Gastrocnemius medialis (tissue), 4 donors: ENCODE measurements at regions of chr2 and their contacts with region 1.

Region 1: GRCh38 chr2:101419096-101419663 is 31.9 kb upstream of the CREG2 start:
- DNase-seq: peak; percentile 17 to 32
- ATAC-seq: peak; percentile 62 to 83
- H3K4me3 ChIP-seq: no peak overlapping the region
- H3K27ac ChIP-seq: no peak overlapping the region
- H3K4me1 ChIP-seq: no peaks in the 10 kb centered on the region
- H3K27me3 ChIP-seq: no peaks in the 10 kb centered on the region
- CTCF ChIP-seq: peak; percentile 45 to 73 (median 65)
- POLR2A ChIP-seq: no peak

Region 2: GRCh38 chr2:101463891-101464641 is 44.9 kb after region 1 on chr2:
- in situ Hi-C with region 1: no loop called
- intact Hi-C with region 1: no loop called
- DNase-seq: no peak
- ATAC-seq: peak in 1 of 2 donors; percentile 55
- H3K4me3 ChIP-seq: no peak overlapping the region
- H3K27ac ChIP-seq: no peak overlapping the region
- H3K4me1 ChIP-seq: peaks cover 0 to 7% of the 10 kb centered on the region in 2 donors
- H3K27me3 ChIP-seq: no peaks in the 10 kb centered on the region
- CTCF ChIP-seq: no peak
- POLR2A ChIP-seq: no peak

Region 3: DNA sequence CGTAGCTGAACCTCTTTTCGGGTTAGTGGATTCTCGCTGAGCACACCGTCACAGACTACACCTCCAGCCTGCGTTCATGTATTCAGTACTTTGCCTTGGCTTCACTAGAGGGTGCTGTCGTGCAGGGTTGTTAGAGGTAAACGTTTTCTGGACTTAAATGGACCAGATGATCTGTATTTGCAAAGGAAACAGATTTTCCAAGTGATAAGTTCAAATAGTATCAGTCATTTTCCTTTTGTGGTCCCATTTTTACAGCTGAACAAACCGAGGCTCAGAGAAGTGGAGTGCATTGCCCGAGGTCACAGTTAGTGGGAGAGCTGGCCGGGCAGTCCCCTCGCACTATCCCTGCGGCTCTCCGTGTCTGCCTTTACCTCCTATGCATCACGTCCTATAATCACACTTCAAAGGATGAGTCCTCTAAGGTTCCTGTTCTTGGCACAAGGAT is 404.2 kb after region 1 on chr2:
- in situ Hi-C with region 1: loop called in 2 of 4 experiments (anchors 10 to 25 kb)
- intact Hi-C with region 1: no loop called
- DNase-seq: peak; percentile 13 to 42
- ATAC-seq: peak; percentile 73 to 77
- H3K4me3 ChIP-seq: no peak overlapping the region
- H3K27ac ChIP-seq: no peak overlapping the region
- H3K4me1 ChIP-seq: peaks cover 15 to 17% of the 10 kb centered on the region in 2 donors
- H3K27me3 ChIP-seq: no peaks in the 10 kb centered on the region
- CTCF ChIP-seq: peak; percentile 24 to 67 (median 48)
- POLR2A ChIP-seq: no peak

Region 4: GRCh38 chr2:101831351-101831865 is 412.2 kb after region 1 on chr2:
- in situ Hi-C with region 1: loop called in 3 of 4 experiments (anchors 5 to 25 kb)
- intact Hi-C with region 1: loop called (anchors 1 kb)
- DNase-seq: peak; percentile 47 to 71
- ATAC-seq: peak; percentile 77 to 95
- H3K4me3 ChIP-seq: no peak overlapping the region
- H3K27ac ChIP-seq: peak overlapping the region; percentile 23 to 50 (median 34)
- H3K4me1 ChIP-seq: peaks cover 11 to 12% of the 10 kb centered on the region in 2 donors
- H3K27me3 ChIP-seq: no peaks in the 10 kb centered on the region
- CTCF ChIP-seq: peak; percentile 55 to 83 (median 73)
- POLR2A ChIP-seq: no peak

Region 5: DNA sequence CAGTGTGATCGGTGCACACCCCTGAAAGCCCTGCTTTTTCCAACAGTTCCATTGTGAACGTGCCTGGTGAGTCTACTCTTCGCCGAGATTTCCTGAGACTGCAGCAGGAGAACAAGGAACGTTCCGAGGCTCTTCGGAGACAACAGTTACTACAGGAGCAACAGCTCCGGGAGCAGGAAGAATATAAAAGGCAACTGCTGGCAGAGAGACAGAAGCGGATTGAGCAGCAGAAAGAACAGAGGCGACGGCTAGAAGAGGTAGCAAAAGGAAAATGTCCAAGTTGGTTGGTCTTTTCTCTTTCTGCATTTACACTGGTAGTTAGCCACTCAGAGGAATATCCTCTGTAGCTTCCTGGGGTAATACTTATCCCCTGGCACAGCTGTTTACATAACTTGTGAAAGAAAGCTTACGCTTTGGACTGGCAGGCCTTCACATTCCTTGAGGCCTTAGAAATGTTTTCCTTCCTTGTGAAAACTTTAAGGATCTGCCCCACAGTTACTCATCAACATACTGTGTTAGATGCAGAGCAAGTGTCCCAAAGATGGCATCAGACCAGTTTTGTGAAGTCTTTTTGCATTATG is 425.0 kb after region 1 on chr2:
- in situ Hi-C with region 1: loop called in 2 of 4 experiments (anchors 10 to 25 kb)
- intact Hi-C with region 1: no loop called
- DNase-seq: no peak
- ATAC-seq: no peak
- H3K4me3 ChIP-seq: no peak overlapping the region
- H3K27ac ChIP-seq: no peak overlapping the region
- H3K4me1 ChIP-seq: peaks cover 7 to 14% of the 10 kb centered on the region in 2 donors
- H3K27me3 ChIP-seq: no peaks in the 10 kb centered on the region
- CTCF ChIP-seq: no peak
- POLR2A ChIP-seq: no peak

Region 6: DNA sequence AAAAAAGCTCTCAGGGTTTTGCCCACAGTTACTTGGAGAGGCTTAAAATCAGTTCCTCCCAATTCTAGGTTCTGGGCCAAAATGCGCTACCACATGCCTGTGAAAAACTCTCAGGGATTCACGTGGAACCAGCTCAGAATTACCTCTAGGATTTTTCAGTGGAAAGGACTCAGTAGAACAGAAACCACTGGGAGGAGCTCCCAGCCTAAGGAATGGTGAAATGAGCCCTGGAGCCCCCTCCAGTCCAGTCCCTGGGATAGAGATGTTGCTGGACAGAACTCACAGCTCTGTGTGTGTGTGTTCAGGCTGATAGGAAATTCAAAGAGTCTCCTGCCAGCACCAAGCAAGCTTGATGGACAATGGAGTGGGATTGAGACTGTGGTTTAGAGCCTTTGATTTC is 1032.8 kb after region 1 on chr2:
- in situ Hi-C with region 1: loop called in 1 of 4 experiments (anchors 10 kb)
- intact Hi-C with region 1: no loop called
- DNase-seq: no peak
- ATAC-seq: no peak
- H3K4me3 ChIP-seq: no peak overlapping the region
- H3K27ac ChIP-seq: no peak overlapping the region
- H3K4me1 ChIP-seq: no peaks in the 10 kb centered on the region
- H3K27me3 ChIP-seq: no peaks in the 10 kb centered on the region
- CTCF ChIP-seq: no peak
- POLR2A ChIP-seq: no peak